MCF 10A (cell line): ENCODE measurements at regions of chr9 and their contacts with region 1.

Region 1: DNA sequence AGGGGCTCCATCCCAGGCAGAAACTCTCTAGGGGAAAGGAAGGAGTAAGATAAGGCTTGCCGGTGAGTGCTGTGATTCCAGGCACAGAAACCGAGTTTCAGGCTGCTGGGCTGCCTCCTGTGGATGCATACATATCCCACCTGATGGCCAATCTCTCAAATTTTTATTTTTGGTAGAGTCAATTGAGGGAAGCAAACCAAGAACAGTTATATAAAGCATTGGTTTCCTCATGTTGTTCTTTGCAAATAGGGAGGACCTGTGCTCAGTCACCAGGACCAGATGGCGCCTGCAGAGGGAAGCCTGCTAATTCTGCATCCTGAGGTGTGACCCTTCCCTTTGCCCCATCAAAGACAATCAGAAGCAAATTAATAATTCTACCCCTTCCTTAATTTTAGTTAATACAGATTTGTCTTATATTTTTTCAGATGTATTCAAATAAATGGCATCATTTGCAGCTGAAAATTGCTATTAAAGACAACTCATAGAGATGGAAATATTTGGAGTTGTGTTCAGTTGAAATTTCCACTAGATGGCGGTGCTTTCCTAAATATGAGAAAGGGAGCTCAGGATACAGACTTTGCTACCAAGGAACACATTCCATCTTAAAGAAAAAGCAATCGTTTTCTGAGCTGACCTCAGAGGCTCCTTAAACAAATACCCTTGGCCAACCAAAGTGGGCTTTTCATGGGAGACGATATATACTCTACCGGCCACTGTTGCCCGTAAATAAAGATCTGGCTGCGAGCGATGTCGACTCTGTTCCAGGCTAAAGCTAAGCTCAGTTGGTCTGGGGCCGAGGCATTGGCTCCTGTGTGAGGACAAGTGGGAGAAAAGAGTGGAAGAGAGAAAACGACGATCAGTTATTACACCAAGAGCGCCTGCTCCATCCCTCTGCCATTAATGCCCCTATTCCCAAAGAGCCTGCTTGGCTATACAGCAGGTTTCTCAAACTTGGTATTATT is 225.7 kb upstream of the KLF9 start:
- DNase-seq: peak; percentile 64
- H3K4me3 Mint-ChIP-seq: no peak overlapping the region
- H3K27ac Mint-ChIP-seq: no peak overlapping the region
- H3K4me1 Mint-ChIP-seq: no peaks in the 10 kb centered on the region
- H3K27me3 Mint-ChIP-seq: peaks cover 18% of the 10 kb centered on the region
- CTCF ChIP-seq: peak; percentile 66

Region 2: GRCh38 chr9:70654144-70654543 is 14.0 kb after region 1 on chr9:
- CTCF ChIA-PET with region 1: interaction called, 11 read pairs
- POLR2A ChIA-PET with region 1: no interaction called
- intact Hi-C with region 1: no loop called
- DNase-seq: no peak
- H3K4me3 Mint-ChIP-seq: no peak overlapping the region
- H3K27ac Mint-ChIP-seq: no peak overlapping the region
- H3K4me1 Mint-ChIP-seq: no peaks in the 10 kb centered on the region
- H3K27me3 Mint-ChIP-seq: no peaks in the 10 kb centered on the region
- CTCF ChIP-seq: no peak